Left cardiac atrium (tissue), 4 donors: ENCODE measurements at regions of chr19 and their contacts with region 1.

Region 1: DNA sequence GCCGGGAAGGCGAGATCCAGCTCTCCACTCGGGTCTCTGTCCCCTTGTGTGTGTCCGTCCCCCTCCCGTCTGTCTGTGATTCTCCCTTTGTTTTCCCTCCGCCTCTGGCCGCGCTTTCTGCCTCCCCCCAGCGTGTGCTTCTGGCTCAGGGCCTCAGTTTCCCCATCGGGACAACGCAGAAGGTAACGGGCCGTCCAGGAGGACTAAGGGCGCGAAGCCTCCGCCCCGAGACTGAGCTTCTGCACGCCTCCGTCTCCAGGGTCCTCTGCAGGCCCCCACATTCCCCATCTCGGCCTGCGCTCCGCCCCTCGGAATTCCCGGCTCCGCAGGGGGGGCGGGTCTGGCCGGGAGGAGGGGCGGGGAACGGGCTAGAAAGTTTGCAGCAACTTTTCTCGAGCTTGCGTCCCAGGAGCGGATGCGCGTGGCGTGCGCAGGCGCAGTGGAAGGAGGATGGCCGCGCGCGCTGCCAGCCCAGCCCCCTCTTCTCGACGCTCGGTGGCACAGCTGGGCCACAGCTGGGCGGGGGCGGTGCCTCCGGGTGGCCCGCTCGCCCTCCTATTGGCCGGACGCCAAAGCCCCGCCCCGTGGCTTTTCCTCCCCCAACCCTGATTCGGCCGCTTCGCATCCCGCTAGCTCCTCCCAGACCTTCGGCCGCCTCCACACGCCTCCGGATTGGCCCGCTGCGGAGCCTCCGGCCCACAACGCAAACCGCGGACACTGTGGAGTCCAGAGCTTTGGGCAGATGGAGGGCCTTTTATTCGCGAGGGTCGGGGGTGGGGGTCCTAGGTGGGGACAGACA is at the start of gene SIX5:
- DNase-seq: peak; percentile 98
- ATAC-seq: peak; percentile 58 to 71
- total RNA-seq, gene SIX5: 15.6 to 21.1 TPM

Region 2: DNA sequence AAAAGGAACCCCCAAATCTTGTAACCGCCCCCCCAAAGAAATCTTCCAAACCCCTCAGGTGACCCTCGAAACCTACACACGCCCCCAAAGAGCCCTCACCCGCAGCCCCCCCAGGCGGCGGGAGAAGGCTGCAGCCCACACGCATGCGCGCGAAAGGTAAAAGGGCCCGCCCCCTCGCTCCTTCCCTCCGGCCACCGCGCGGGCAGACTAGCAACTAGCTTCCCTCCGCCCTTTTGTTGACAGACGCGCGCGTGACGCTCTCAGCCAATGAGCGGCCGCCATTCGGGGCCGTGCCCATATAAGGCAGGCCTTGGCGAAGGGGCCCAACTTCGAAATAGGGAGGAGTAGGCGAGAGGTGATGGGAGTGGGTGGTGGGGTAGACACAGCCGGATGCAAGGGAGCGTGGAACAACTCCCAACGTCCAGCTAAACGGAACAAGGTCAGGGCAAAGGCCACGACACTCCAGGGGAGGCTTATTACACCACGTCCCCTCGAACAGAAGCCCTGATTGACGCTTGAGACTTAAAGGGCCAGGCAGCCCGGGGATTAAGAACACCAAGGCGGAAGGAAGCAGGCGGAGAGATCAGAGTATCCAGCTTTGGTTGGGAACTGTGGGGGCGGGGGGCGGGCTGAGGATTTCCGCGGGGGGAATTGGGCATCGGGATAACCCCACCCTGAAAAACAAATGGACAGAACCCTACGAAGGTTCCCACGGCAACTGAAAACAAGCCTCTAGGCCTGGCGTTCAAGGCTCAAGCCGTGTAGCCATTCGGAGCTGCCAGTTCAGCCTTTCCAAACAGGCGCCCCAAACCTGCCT is 51.8 kb before region 1 on chr19:
- intact Hi-C with region 1: loop called (anchors 5 kb)
- DNase-seq: peak; percentile 99
- ATAC-seq: peak; percentile 98